Posterior vena cava (tissue), 2 donors: ENCODE measurements at regions of chr7 and their contacts with region 1.

Region 1: DNA sequence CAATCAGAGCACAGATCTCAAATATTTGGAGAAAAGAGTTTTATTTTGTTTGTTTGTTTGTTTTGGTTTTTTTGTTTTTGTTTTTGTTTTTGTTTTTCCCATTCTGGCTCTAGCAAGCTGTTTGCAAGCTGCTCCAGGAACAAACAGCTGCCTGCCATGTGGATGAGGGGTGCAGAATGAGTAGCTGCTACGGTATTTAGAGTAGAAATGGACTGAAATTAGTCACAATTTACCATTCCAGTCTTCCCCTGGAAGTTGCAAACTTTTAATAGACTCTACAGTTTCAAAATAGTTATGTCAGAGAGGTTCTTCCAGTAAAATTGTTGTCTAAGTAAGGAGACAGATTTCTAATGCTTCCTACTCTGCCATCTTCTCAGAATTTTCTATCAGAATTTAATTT is 27.1 kb upstream of the TAS2R16 start:
- DNase-seq: no peak

Region 2: DNA sequence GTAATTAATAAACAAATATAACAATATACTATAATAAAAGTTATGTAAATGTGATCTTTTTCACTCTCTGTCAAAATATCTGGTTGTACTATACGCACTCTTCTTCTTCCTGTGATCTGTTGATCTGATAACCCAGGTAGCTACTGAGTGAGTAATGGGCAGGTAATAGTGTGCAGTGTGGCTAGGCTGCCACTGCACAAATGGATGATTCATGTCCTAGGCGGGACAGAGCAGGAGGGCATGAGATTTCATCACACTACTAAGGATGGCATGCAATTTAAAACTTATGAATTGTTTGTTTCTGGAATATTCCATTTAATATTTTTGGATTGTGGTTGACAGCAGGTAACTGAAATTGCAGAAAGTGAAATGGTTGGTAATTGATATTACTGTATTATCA is 71.6 kb before region 1 on chr7:
- intact Hi-C with region 1: loop called in 1 of 2 experiments (anchors 2 kb)
- DNase-seq: no peak